GM12878 (cell line): ENCODE measurements at regions of chr2 and their contacts with region 1.

Region 1: DNA sequence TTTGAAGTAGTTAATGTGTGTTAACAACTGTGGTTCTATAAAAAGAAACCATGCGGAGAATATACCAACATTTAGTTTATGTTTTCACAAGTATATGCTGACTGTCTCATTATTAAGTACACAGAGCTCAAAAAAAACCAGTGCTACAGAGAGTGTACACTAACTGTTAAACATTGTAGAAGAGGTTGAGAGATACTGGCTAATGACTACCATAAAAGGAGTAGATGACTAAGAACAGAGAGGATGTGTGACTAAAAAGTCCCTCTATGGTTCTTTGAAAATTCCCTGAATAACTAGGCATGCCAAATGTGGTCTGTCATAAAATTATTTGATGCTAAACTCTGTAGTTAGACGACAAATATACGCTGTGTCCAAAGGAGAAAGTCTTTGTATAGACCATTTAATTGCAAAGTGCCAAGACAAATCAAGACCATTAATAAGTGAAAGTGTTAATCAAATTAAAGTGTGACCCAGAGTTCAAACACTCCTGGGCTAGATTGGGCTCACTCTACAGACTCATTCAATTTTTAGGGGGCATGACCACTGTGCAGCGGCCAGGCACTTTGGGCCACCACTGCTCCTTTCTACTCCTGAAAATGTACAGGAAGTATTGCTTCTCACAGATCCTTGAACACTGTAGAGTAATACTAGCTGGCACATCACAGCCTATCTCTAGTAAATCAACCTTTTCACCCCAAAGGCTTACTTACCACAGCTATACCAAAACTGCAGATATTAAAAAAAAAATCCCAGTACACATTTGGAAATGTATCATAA is 45.1 kb upstream of the SERTAD2 start:
- DNase-seq: peak; percentile 83
- ATAC-seq: peak; percentile 90
- H3K4me3 ChIP-seq: no peak overlapping the region; the same call in 1 of the 2 replicates
- H3K27ac ChIP-seq: peak overlapping the region; percentile 98
- H3K4me1 ChIP-seq: peaks cover 53% of the 10 kb centered on the region
- H3K27me3 ChIP-seq: no peaks in the 10 kb centered on the region
- CTCF ChIP-seq: no peak
- EP300 ChIP-seq: peak; percentile 41 to 84; a peak in 2 of 4 replicates
- POLR2A ChIP-seq: no peak
- RAD21 ChIP-seq: no peak

Region 2: GRCh38 chr2:64661741-64662169 is 37.1 kb before region 1 on chr2:
- CTCF ChIA-PET with region 1: interaction called, 25 read pairs
- POLR2A ChIA-PET with region 1: interaction called, 19 read pairs
- RAD21 ChIA-PET with region 1: interaction called, 31 read pairs
- SMC1A ChIA-PET with region 1: interaction called, 262 read pairs
- in situ Hi-C with region 1: no loop called
- intact Hi-C with region 1: no loop called
- DNase-seq: no peak
- ATAC-seq: peak; percentile 81
- H3K4me3 ChIP-seq: no peak overlapping the region
- H3K27ac ChIP-seq: peak overlapping the region; percentile 56; the same call in 1 of the 2 replicates
- H3K4me1 ChIP-seq: peaks cover 40% of the 10 kb centered on the region
- H3K27me3 ChIP-seq: no peaks in the 10 kb centered on the region
- CTCF ChIP-seq: peak in 1 of 3 experiments; percentile 23; a peak in 1 of 6 replicates
- EP300 ChIP-seq: peak in 1 of 2 experiments; percentile 33; a peak in 1 of 4 replicates
- POLR2A ChIP-seq: no peak
- RAD21 ChIP-seq: no peak

Region 3: DNA sequence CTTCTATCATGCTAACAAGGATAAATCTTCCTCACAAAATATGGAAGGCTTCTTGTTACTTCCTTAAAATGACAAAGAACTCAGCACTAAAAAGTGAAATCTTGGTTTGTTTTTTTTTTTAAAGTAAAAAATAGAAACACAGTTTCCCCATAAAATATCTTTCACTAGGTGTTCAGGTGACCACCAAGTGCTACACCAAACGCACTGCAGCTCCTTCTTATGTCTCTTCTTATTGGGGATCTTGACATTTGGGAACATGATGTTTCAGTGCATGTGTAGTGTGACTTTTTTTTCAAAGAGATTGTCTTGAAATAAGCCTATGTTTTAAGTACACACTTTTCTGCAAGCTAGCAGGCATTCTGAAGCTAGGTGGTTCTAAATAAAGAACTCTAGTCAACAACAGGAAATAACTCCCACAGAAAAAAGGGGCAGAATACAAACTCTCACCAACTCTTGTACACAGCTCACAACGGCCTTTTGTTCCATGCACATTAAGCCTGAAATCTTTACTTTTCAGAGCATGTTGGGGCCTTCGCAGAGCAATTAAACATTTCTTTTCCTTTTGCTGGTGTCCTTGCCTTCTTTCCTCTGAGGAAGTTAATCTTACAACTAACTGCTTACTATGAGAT is 31.9 kb before region 1 on chr2:
- CTCF ChIA-PET with region 1: interaction called, 9 read pairs
- POLR2A ChIA-PET with region 1: interaction called, 19 read pairs
- RAD21 ChIA-PET with region 1: interaction called, 17 read pairs
- SMC1A ChIA-PET with region 1: interaction called, 262 read pairs
- in situ Hi-C with region 1: no loop called
- intact Hi-C with region 1: no loop called
- DNase-seq: no peak
- ATAC-seq: peak; percentile 81
- H3K4me3 ChIP-seq: peak overlapping the region; percentile 33
- H3K27ac ChIP-seq: peak overlapping the region; percentile 71
- H3K4me1 ChIP-seq: peaks cover 15% of the 10 kb centered on the region
- H3K27me3 ChIP-seq: no peaks in the 10 kb centered on the region
- CTCF ChIP-seq: no peak
- EP300 ChIP-seq: no peak; a peak in 1 of 4 replicates
- POLR2A ChIP-seq: no peak
- RAD21 ChIP-seq: peak; percentile 4; the same call in 1 of the 2 replicates

Region 4: GRCh38 chr2:64675860-64676259 is 23.0 kb before region 1 on chr2:
- CTCF ChIA-PET with region 1: interaction called, 14 read pairs
- POLR2A ChIA-PET with region 1: interaction called, 9 read pairs
- RAD21 ChIA-PET with region 1: interaction called, 10 read pairs
- SMC1A ChIA-PET with region 1: interaction called, 52 read pairs
- in situ Hi-C with region 1: no loop called
- intact Hi-C with region 1: no loop called
- DNase-seq: no peak
- ATAC-seq: peak; percentile 38; the same call in 2 of the 3 replicates
- H3K4me3 ChIP-seq: no peak overlapping the region
- H3K27ac ChIP-seq: no peak overlapping the region
- H3K4me1 ChIP-seq: peaks cover 20% of the 10 kb centered on the region
- H3K27me3 ChIP-seq: no peaks in the 10 kb centered on the region
- CTCF ChIP-seq: no peak
- EP300 ChIP-seq: no peak
- POLR2A ChIP-seq: no peak
- RAD21 ChIP-seq: no peak

Region 5: DNA sequence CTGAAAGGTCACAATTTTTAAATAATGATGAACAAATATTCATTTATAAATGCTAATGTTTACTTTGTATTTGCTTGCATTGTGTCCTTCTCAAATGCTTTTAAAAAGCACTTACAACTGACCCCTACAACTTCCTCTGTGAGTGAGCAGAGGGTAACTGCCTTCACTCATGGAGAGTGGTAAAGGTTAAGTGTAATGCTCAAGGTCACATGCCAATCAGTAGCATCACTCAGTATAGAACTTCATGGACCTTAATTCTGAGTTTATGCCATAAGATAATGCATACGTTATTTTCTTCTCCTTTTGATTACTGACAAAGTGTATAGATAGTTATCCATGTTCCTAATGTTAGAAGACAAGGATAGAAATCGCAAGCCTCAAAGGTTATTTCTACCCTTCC is 46.7 kb after region 1 on chr2:
- CTCF ChIA-PET with region 1: interaction called, 5 read pairs
- POLR2A ChIA-PET with region 1: interaction called, 43 read pairs
- RAD21 ChIA-PET with region 1: interaction called, 44 read pairs
- SMC1A ChIA-PET with region 1: interaction called, 38 read pairs
- in situ Hi-C with region 1: no loop called
- intact Hi-C with region 1: loop called (anchors 2 kb)
- DNase-seq: no peak
- ATAC-seq: peak; percentile 39
- H3K4me3 ChIP-seq: peak overlapping the region; percentile 46
- H3K27ac ChIP-seq: peak overlapping the region; percentile 10
- H3K4me1 ChIP-seq: no peaks in the 10 kb centered on the region
- H3K27me3 ChIP-seq: no peaks in the 10 kb centered on the region
- CTCF ChIP-seq: no peak
- EP300 ChIP-seq: no peak
- POLR2A ChIP-seq: no peak
- RAD21 ChIP-seq: no peak